Activated naive CD4-positive, alpha-beta T cell treated with anti-CD3 and anti-CD28 coated beads for 36 hours (primary cell): ENCODE measurements at regions of chr12 and their contacts with region 1.

Region 1: DNA sequence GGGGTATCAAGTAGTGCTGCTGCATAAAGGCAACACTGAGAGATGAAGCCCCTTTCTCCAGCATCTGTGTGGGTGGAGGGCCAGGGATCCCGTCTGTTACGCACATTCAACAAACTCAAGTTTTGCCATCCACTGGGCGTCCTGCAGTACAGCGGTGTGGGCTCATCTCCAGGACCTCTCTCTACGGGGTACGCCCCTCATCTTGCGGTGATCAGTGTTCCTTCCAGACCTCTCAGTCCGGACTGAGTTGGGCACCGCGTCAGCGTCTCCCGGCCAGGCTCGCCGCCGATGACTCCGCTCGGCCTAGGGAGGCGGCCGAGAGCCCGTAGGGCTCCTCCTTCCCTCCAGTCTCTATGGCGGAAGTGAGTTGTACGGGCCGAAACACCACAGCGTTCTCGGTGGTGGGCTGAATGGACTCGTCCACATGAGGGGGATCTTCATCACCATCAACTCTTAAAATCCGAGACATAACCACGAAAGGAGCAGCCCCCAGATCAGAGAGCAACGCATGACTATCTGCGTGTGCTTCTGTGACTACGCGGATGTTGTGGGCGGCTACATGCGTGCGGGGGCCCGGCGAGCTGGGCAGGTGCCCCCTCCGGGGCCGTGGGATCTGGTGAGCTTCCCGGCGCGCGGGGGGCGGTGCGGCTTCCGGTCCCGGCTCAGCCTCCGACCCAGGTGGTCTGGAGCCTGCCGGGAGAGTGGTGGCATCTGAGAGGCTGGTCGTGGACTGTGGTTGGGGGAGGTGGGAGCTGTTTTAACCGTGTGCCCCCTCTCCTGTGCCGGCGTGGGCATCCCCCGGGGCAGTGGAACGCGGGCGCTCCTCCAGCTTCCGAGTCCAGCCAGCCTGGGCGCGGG is at the start of gene ATG101:
- DNase-seq: peak; percentile 92
- H3K4me3 Mint-ChIP-seq: peak within 1 kb of the TSS; percentile 93
- H3K27ac Mint-ChIP-seq: peak within 1 kb of the TSS; percentile 98
- H3K4me1 Mint-ChIP-seq: peaks cover 44% of the 10 kb centered on the region
- H3K27me3 Mint-ChIP-seq: no peaks in the 10 kb centered on the region
- total RNA-seq, gene ATG101: 21.8 to 22.0 TPM

Region 2: GRCh38 chr12:52082988-52083637 is 13.6 kb after region 1 on chr12:
- CTCF ChIA-PET with region 1: interaction called, 48 read pairs
- intact Hi-C with region 1: loop called (anchors 2 kb)
- DNase-seq: peak; percentile 69
- H3K4me3 Mint-ChIP-seq: no peak overlapping the region
- H3K27ac Mint-ChIP-seq: no peak overlapping the region
- H3K4me1 Mint-ChIP-seq: peaks cover 10% of the 10 kb centered on the region
- H3K27me3 Mint-ChIP-seq: peaks cover 4% of the 10 kb centered on the region

Region 3: GRCh38 chr12:52192173-52192791 is 122.7 kb after region 1 on chr12:
- CTCF ChIA-PET with region 1: no interaction called
- intact Hi-C with region 1: no loop called
- DNase-seq: peak; percentile 29
- H3K4me3 Mint-ChIP-seq: no peak overlapping the region
- H3K27ac Mint-ChIP-seq: no peak overlapping the region
- H3K4me1 Mint-ChIP-seq: no peaks in the 10 kb centered on the region
- H3K27me3 Mint-ChIP-seq: no peaks in the 10 kb centered on the region